BJ (cell line): ENCODE measurements at regions of chr10 and their contacts with region 1.

Region 1: DNA sequence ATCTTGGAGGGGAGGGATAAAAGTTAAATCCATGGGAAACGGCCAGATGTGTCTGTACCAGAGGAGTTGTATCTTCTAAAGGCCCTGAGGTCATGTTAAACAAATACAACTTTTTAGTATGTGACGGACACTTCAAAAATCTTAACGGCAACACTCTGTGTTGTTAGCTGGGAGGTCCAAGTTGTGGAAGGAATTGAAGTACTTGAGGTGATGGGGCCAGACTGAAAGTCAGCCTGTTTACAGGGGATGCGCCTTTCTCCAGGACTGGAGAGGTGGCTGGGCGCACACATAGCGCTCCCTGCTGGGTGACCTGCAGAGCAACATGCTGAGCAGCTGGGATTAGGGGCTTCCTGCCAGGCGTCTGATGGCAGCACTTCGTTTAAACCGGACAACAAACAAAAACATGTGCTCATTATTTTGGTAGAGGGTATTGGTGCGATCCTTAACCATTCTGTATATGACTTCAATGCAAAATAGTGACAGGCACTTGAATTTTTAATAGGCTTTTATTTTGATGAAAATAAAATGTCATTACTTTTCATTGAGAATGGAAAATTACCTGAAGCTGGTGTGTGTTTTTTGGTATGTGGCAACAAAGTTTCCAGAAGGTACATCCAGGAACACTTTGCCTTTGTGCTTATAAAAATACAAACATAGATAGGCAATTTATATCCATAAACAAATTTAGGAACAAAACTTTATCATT is 198.2 kb downstream of the MLLT10 start:
- DNase-seq: peak; percentile 25
- H3K4me3 ChIP-seq: no peak overlapping the region
- H3K27me3 ChIP-seq: no peaks in the 10 kb centered on the region
- CTCF ChIP-seq: peak; percentile 97

Region 2: DNA sequence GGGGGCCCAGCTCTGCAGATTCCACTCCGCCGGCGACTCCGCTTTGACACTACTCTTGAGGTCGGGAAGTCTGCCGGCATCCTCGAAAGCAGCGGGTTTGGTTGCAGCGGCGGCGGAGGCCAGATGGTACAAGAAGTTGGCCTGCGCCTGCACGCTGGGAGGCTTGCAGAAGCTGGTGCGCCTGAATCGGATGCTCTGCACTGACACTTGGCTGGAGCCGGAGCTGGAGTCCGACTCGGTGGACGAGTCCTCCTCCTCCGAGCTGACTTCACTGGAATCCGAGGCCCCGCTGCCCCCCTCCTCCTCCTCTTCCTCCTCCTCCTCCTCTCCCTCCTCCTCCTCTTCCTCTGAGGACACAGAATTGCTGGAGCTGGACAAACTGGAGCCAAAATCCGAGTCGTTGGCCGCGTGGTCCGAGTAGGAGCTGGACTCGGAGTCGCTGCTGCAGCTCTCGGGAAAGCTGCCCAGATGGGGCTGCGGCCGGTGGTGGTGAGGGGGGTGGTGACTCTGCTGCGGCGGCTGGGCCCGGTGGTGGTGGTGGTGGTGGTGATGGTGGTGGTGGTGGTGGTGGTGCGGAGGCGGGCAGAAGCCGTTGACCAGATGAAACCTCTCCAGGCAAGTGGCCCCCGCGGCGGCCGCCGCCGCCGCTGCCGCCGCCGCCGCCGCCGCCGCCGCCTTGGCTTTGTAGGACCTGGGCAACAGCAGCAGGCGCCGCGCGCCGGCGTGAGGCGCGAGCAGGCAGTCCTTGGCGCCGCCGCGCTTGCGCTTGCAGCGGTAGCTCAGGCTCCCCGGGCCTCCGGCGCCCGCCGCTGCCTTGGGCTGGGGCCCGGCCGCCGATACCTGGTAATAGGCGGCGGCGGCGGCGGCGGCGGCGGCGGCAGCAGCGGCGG is 215.7 kb before region 1 on chr10:
- CTCF ChIA-PET with region 1: interaction called, 14 read pairs
- POLR2A ChIA-PET with region 1: interaction called, 5 read pairs
- DNase-seq: no peak
- H3K4me3 ChIP-seq: peak overlapping the region; percentile 59
- H3K27me3 ChIP-seq: no peaks in the 10 kb centered on the region
- CTCF ChIP-seq: no peak

Region 3: DNA sequence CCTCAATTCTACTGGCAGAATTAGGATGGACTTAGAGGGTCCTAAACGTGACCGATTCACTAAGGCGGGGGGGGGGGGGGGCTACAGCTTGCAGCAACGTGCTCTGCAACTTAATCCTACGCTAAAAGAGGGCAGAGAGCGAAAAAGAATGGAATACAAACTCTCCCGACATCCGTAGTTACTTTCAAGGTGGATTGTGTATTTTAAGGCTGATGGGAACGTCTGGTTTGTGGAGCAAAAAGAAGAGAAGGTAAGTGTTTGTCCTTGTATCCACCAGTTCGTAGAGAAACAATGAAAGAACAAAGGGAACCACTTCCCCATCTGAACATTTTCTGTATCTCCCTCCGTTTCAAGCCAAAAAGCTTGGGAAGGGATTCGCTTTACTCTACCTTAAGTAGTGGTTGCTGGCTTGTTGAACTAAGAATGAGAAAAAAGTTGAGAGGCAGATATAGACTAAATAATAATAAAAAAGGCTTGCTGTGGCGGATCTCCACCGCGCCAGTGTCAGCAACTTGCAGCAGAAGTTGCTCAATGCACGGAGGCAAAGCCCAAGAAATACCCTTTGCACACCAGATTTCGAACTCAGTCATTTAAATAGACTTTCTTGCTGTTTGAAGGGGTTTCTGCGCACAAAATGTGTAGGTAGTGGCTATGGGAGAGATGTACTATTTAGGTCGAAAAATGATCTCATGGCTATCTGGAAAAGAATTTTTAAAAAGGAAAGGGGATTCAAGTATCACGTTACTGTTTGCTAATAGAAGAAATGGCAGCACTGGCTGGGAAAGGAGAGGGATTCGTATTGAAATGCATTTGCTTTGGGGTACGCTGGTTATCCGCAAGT is 207.5 kb before region 1 on chr10:
- CTCF ChIA-PET with region 1: interaction called, 10 read pairs
- POLR2A ChIA-PET with region 1: no interaction called
- DNase-seq: no peak
- H3K4me3 ChIP-seq: peak overlapping the region; percentile 59
- H3K27me3 ChIP-seq: no peaks in the 10 kb centered on the region
- CTCF ChIP-seq: no peak

Region 4: GRCh38 chr10:21744203-21744602 is 12.0 kb after region 1 on chr10:
- CTCF ChIA-PET with region 1: interaction called, 10 read pairs
- POLR2A ChIA-PET with region 1: no interaction called
- DNase-seq: no peak
- H3K4me3 ChIP-seq: no peak overlapping the region
- H3K27me3 ChIP-seq: no peaks in the 10 kb centered on the region
- CTCF ChIP-seq: no peak